ENCODE measurements at regions of chr17 and their contacts with region 1.

Region 1: DNA sequence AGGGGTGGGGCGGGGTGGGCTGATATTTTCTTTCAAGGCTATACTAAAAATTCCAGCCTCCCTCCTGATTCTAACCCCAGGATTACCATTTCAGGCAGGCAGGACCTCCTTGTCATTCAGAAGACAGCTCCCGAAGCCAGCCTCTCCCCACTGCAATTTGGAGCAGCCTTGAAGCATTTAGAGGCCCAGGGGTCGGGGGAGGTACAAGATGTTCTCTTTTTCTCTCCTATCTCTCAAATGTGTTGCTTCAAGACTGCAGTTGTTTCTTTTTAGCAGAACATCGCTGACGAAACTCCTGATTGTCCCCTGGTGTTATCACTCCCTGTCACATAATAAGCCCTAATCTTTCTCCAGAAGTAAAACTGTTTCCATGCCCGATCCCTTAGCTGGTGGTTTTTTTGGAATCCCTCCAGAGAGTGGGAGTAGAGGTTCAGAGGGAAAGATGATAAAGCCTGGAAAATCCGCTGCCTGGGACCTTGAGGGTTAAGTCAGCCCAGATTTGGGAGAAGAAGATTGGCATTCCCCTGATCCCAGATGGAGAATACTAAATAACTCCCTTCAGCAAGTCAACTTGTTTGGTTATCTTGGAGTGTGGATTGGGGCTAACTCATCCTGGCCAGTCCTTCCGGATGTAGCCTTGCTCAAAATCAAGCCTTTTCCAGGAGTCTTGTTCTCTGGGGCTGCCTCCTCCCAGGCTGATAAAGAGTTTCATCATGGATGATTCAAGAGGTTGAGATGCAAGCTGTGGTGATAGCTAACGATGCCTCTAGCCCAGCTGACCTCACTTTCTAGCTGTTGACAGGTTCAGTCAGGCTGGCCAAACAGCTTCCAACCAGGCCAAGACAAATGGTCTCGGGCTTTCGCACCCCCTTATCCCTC is 71.3 kb downstream of the SOX9 start:
- DNase-seq: peak; percentile 90
- H3K4me3 ChIP-seq: no peak overlapping the region
- H3K27ac ChIP-seq: peak overlapping the region; percentile 85
- H3K27me3 ChIP-seq: no peaks in the 10 kb centered on the region
- CTCF ChIP-seq: no peak

Region 2: GRCh38 chr17:72205357-72205756 is 13.2 kb after region 1 on chr17:
- CTCF ChIA-PET with region 1: no interaction called
- POLR2A ChIA-PET with region 1: no interaction called
- DNase-seq: no peak
- H3K4me3 ChIP-seq: no peak overlapping the region
- H3K27ac ChIP-seq: no peak overlapping the region
- H3K27me3 ChIP-seq: peaks cover 19% of the 10 kb centered on the region
- CTCF ChIP-seq: no peak

Region 3: DNA sequence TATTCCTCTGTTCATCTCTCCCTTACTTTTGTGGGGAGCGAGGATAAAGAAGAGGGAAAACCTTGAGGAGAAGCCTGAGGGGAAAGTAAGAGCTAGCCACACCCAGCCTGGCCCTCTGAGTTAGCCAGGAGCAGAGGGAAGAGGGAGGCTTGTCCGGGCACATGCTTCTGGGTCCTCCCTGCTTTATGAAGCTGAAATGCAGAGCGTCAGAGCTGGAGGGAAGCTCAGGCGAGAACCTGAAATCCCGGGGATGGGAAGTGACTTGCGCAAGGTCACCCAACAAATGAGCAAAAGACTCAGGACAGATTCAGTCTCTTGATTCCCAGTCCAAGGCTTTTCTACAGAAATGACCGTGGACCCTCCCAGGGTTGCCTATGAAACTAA is 81.5 kb after region 1 on chr17:
- CTCF ChIA-PET with region 1: interaction called, 10 read pairs
- POLR2A ChIA-PET with region 1: no interaction called
- DNase-seq: no peak
- H3K4me3 ChIP-seq: no peak overlapping the region
- H3K27ac ChIP-seq: no peak overlapping the region
- H3K27me3 ChIP-seq: no peaks in the 10 kb centered on the region
- CTCF ChIP-seq: no peak